ENCODE measurements at regions of chr1 and their contacts with region 1.

Region 1: GRCh38 chr1:145858894-145859490 is at the start of gene PIAS3:
- DNase-seq: peak; percentile 66 to 87 (median 76)
- ATAC-seq: peak; percentile 79 to 88
- H3K4me3 Mint-ChIP-seq: peak within 1 kb of the TSS; percentile 95 to 99 (median 98)
- H3K27ac Mint-ChIP-seq: peak within 1 kb of the TSS; percentile 85 to 96 (median 95)
- H3K4me1 Mint-ChIP-seq: peaks cover 13 to 21% (median 14%) of the 10 kb centered on the region in 4 donors
- H3K27me3 Mint-ChIP-seq: peaks cover 0 to 4% (median 0%) of the 10 kb centered on the region in 5 donors
- polyA plus RNA-seq, gene PIAS3: 10.7 to 14.7 (median 12.4) TPM

Region 2: GRCh38 chr1:145691159-145691558 is 167.8 kb before region 1 on chr1:
- POLR2A ChIA-PET with region 1: no interaction called
- DNase-seq: no peak
- ATAC-seq: no peak
- H3K4me3 Mint-ChIP-seq: peak overlapping the region in 5 of 10 donors; percentile 30 to 72 (median 54)
- H3K27ac Mint-ChIP-seq: peak overlapping the region in 5 of 10 donors; percentile 25 to 86 (median 79)
- H3K4me1 Mint-ChIP-seq: peaks cover 12 to 44% (median 29%) of the 10 kb centered on the region in 4 donors
- H3K27me3 Mint-ChIP-seq: no peaks in the 10 kb centered on the region

Region 3: GRCh38 chr1:145823565-145824498 is 35.2 kb before region 1 on chr1 and contains the starts of genes POLR3C and RNF115:
- POLR2A ChIA-PET with region 1: interaction called, 22 read pairs
- DNase-seq: peak; percentile 79 to 94 (median 84)
- ATAC-seq: peak; percentile 95 to 96
- H3K4me3 Mint-ChIP-seq: peak within 1 kb of the TSS; percentile 96 to 99 (median 97)
- H3K27ac Mint-ChIP-seq: peak within 1 kb of the TSS; percentile 91 to 98 (median 97)
- H3K4me1 Mint-ChIP-seq: peaks cover 15 to 40% (median 22%) of the 10 kb centered on the region in 4 donors
- H3K27me3 Mint-ChIP-seq: no peaks in the 10 kb centered on the region
- polyA plus RNA-seq, gene POLR3C: 40.2 to 54.5 (median 40.7) TPM
- polyA plus RNA-seq, gene RNF115: 5.8 to 6.6 (median 6.1) TPM

Region 4: GRCh38 chr1:145871994-145872924 is 13.3 kb after region 1 on chr1:
- POLR2A ChIA-PET with region 1: interaction called, 39 read pairs
- DNase-seq: peak in 7 of 10 donors; percentile 13 to 54 (median 36)
- ATAC-seq: peak; percentile 91 to 92
- H3K4me3 Mint-ChIP-seq: peak overlapping the region; percentile 75 to 88 (median 81)
- H3K27ac Mint-ChIP-seq: peak overlapping the region; percentile 75 to 94 (median 84)
- H3K4me1 Mint-ChIP-seq: peaks cover 9 to 20% (median 17%) of the 10 kb centered on the region in 4 donors
- H3K27me3 Mint-ChIP-seq: peaks cover 0 to 11% (median 2%) of the 10 kb centered on the region in 5 donors

Region 5: DNA sequence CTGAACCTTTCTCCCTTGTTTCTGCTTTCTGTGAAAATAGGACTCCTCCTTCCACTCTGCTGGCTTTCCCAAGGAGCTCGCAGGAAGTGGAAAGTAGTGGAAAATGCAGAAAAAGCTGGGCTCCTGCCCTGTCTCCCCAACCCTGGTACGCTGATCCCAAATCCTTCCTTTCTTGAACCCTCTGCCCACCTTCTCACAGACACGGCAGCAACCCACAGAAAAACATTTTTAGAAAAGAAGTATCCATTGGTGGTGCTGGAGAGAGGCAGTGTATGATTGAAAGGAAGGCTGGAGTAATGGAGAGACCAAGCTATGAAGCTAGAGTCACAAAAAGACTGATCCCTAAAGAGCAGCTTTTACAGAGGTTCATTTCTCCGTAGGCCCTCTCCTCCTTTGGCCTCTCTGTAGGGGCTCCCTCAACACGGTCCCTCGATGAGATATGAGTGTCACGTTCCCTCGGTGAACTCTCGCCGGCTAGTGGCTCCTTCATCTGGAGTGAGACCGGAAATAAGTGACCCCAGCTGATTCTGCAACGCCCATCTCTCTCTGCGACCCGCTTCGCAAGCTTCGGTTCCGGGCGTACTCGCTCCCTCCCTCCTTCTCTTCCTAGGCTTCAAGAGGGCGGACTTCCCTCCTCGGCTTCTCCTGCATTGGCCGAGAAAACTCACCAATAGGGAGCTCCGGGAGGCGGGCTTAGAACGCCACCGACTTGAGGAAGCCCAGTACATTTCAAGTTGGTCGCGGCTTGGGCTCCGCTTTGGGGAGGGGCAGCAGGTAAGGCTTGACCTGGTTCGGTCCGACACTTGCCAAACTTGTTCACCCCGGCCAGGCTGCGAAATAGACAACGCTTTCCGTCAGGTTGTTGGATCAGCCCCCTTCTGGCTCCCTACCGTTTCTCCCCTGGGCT is 105.3 kb after region 1 on chr1 and contains the starts of genes ANKRD34A and POLR3GL:
- POLR2A ChIA-PET with region 1: interaction called, 31 read pairs
- DNase-seq: peak; percentile 75 to 95 (median 89)
- ATAC-seq: peak; percentile 84 to 87
- H3K4me3 Mint-ChIP-seq: peak within 1 kb of the TSS; percentile 88 to 99 (median 92)
- H3K27ac Mint-ChIP-seq: peak within 1 kb of the TSS; percentile 86 to 99 (median 98)
- H3K4me1 Mint-ChIP-seq: peaks cover 39 to 68% (median 66%) of the 10 kb centered on the region in 4 donors
- H3K27me3 Mint-ChIP-seq: no peaks in the 10 kb centered on the region
- polyA plus RNA-seq, gene ANKRD34A: 0.12 to 0.38 (median 0.25) TPM
- polyA plus RNA-seq, gene POLR3GL: 98.4 to 101 (median 98.6) TPM

Region 6: GRCh38 chr1:146036965-146037646 is 178.1 kb after region 1 on chr1:
- POLR2A ChIA-PET with region 1: interaction called, 25 read pairs
- DNase-seq: peak; percentile 38 to 94 (median 80)
- ATAC-seq: peak; percentile 51 to 68
- H3K4me3 Mint-ChIP-seq: peak overlapping the region; percentile 92 to 99 (median 96)
- H3K27ac Mint-ChIP-seq: peak overlapping the region; percentile 90 to 100 (median 96)
- H3K4me1 Mint-ChIP-seq: peaks cover 32 to 43% (median 38%) of the 10 kb centered on the region in 4 donors
- H3K27me3 Mint-ChIP-seq: peaks cover 0 to 17% (median 0%) of the 10 kb centered on the region in 5 donors

Measured in naive thymus-derived CD8-positive, alpha-beta T cell (primary cell).